ENCODE measurements at regions of chr5 and their contacts with region 1.

Region 1: DNA sequence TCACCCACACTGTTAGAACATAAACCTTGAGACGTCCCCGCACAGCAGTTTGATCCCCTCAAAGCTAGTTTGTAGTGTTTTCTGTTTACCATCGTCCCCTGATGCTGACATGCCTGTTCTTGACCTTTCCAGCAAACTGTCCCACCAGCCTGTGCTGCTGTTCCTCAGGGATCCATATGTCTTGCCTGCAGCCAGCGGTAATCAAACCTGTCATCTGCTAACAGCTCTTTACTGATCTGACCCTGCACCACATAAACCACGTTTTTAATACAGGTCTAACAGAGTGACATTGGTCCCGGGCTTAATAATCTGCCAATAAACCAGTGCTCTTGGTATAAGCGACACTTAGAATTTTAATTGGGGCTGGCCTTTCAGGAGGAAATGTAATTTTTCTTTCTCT is 34.7 kb downstream of the PPIC start:
- DNase-seq: no peak
- H3K4me3 ChIP-seq: no peak overlapping the region
- CTCF ChIP-seq: no peak
- POLR2A ChIP-seq: no peak

Region 2: GRCh38 chr5:122933956-122934355 is 67.9 kb before region 1 on chr5:
- intact Hi-C with region 1: loop called (anchors 2 kb)
- DNase-seq: no peak
- H3K4me3 ChIP-seq: no peak overlapping the region
- CTCF ChIP-seq: no peak
- POLR2A ChIP-seq: no peak

Region 3: DNA sequence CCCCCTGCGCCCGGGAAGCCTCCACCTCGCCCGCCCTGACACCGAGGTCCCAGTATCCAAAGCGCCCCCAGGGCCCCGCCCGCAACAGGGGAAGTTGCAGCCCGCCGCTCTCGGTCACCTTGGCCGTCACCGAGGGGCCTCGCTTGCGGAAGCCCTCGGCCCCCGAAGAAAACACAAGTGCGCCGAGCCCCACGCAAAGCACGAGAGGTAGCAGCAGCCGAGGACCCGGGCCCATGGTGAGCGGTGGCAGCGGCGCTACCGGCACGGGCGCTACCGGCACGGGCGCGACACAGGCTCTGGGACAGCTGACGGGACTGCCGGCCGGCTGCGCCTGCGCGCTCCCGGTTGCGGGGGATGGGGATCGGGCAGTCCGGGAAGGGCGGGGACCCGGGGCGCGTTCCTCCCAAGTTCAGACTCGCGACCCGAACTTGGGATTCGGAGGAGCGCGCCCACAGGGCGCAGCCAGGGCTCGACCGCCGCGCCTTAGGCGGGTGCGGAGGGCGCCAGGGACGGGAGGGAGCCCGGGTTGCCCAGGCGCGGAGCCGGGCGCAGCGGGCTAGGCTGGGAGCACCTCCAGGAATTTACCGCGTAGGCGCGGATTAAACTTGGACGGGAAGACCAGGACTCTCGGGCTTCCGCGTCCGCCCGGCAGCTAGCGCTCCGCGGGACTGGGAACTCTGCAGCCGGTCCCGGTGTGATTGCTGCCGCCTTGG is 34.7 kb after region 1 on chr5 and contains the start of gene PPIC:
- intact Hi-C with region 1: no loop called
- DNase-seq: peak; percentile 73 to 96
- H3K4me3 ChIP-seq: peak within 1 kb of the TSS; percentile 79
- CTCF ChIP-seq: no peak
- POLR2A ChIP-seq: no peak
- total RNA-seq, gene PPIC: 11.3 to 17.5 (median 15.8) TPM